ENCODE measurements at regions of chr17 and their contacts with region 1.

Region 1: DNA sequence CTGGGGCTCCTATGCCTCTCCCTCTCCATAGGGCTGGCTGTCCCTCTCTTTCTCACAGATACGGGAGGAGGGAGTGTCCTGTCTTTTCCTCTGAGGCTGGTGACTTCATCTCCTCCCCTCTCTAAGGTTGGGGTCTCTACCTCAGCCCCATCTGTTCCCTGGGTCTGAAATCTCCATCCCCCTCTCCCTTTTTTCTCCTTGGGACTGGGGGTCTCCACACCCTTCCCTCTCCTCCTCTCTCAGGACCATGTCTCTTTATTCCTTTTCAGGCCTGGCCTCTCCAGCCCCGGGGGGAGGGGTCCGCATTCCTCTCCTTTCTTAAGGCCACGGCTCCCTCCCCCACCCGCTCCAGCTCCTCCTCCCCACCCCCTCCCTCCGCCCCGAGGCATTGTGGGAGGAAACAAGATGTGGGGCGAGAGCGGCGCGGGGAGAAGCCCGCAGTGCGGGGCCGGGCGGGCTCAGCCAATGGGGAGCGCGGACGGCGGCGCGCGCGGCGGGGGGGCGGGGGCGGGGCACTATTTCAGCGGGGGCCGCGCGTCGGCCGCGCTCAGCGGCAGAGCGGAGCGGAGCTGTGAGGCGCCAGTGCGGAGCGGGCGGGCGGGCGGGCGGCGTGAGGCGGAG is at the start of gene DYNLL2:
- DNase-seq: peak; percentile 95
- H3K4me3 Mint-ChIP-seq: peak within 1 kb of the TSS; percentile 88
- H3K27ac Mint-ChIP-seq: peak within 1 kb of the TSS; percentile 80
- H3K4me1 Mint-ChIP-seq: peaks cover 26% of the 10 kb centered on the region
- H3K27me3 Mint-ChIP-seq: peaks cover 20% of the 10 kb centered on the region
- total RNA-seq, gene DYNLL2: 36.6 and 37.2 TPM in 2 replicates

Region 2: DNA sequence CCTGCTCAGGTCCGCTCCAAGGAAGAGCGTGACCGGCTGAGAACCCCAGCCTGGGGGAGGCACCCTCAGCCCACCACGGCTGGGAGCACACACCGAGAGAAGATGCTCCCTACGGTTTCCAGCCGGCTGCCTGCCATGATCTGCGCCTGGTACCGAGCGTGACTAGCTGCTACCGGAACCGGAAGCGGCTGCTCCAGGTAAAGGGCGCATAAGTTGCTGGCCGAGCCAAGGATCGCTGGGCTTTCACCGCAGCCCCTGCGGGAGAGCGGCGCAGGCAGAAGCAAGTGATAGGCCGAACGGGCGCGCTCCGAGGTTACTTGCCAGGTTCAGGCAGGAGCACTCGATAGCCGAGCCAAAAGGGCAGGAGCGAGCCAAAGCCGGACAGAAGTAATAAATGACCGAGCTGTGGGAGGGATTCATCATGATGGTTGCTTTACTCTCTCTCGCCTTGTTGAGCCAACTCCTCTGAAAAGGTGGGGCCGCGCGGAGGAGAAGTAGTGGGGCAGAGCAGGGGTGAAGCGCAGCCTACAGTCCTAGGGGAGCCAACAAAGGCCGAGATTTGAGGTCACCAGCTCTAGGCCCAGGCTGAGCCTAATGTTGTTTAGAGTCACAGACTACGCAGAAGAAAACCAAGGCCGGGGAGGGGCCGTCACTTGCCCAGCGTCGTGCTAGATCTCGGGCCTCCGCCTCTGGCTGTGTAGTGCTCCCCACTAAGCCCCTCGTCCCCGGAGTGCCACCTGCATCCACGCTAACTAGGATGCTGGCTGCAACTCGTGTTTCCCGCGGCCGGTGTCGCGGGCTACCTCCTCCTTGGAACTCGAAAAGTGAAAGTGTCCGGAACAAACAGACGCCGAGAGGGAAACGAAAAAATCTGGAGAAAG is 232.9 kb before region 1 on chr17 and contains the start of gene MRPS23:
- intact Hi-C with region 1: loop called (anchors 1 kb)
- DNase-seq: peak; percentile 99
- H3K4me3 Mint-ChIP-seq: peak within 1 kb of the TSS; percentile 97
- H3K27ac Mint-ChIP-seq: peak within 1 kb of the TSS; percentile 97
- H3K4me1 Mint-ChIP-seq: peaks cover 28% of the 10 kb centered on the region
- H3K27me3 Mint-ChIP-seq: no peaks in the 10 kb centered on the region
- total RNA-seq, gene MRPS23: 83.3 and 84.8 TPM in 2 replicates

Region 3: DNA sequence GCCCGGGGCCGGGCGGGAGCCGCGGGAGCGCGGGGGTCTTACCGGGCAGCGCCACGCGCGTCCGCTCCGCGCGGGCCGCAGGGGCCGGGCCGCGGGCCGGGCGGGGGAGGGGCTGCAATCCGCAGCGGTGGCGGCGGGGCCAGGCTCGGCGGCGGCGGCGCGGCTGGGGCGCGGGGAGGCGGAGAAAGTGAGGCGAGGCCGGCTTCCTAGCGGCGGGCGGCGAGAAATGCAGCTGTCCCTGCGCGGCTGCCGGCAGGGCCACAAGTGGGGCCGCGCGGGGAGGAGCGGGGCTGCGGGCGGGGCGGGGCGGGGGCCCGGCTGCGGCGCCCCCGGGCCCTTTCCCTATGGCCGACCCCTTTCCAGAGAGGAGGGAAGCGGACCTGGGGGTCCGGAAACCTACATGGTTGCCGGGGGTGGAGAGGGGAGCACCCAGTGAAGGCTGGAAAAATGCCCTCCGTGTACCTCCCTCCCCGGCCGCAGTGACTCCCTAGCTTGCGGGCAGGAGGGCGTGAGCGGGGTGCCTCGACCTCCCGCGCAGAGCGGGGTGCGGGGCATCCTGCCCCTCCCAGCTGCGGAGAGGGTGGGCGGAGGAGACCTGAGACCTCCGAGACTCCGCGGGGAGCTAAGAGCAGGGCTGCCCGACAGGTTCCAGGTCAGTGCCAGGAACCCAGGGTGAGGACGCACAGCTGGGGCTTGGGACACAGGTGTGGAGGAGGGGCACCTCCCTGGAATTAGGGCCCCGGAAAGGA is 127.6 kb before region 1 on chr17 and contains the start of gene CUEDC1:
- intact Hi-C with region 1: no loop called
- DNase-seq: peak; percentile 91
- H3K4me3 Mint-ChIP-seq: peak within 1 kb of the TSS; percentile 75
- H3K27ac Mint-ChIP-seq: no peak within 1 kb of the TSS
- H3K4me1 Mint-ChIP-seq: peaks cover 24% of the 10 kb centered on the region
- H3K27me3 Mint-ChIP-seq: peaks cover 51% of the 10 kb centered on the region
- total RNA-seq, gene CUEDC1: 0.50 and 0.58 TPM in 2 replicates

Region 4: DNA sequence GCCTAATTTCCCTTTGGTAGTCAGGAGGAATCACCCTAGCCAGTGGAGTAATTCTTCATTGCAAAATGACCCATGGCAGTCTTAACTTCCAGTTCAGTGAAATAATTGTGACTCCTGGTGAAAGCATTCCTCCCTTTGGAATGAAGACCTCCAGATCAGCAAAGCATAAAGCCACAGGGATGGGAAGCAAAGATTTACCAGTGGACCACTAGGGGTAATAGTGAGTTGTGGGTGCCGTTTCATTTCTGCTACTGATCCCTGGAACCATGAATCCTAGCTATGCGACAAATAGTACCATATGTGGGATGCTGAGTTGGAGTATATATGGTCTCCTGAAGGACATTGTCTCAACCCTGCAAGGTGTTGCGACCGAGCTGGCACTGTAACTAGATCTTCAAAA is 13.9 kb after region 1 on chr17:
- intact Hi-C with region 1: no loop called
- DNase-seq: no peak
- H3K4me3 Mint-ChIP-seq: no peak overlapping the region
- H3K27ac Mint-ChIP-seq: no peak overlapping the region
- H3K4me1 Mint-ChIP-seq: peaks cover 10% of the 10 kb centered on the region
- H3K27me3 Mint-ChIP-seq: peaks cover 7% of the 10 kb centered on the region